A549 (cell line): ENCODE measurements at regions of chr14 and their contacts with region 1.

Region 1: DNA sequence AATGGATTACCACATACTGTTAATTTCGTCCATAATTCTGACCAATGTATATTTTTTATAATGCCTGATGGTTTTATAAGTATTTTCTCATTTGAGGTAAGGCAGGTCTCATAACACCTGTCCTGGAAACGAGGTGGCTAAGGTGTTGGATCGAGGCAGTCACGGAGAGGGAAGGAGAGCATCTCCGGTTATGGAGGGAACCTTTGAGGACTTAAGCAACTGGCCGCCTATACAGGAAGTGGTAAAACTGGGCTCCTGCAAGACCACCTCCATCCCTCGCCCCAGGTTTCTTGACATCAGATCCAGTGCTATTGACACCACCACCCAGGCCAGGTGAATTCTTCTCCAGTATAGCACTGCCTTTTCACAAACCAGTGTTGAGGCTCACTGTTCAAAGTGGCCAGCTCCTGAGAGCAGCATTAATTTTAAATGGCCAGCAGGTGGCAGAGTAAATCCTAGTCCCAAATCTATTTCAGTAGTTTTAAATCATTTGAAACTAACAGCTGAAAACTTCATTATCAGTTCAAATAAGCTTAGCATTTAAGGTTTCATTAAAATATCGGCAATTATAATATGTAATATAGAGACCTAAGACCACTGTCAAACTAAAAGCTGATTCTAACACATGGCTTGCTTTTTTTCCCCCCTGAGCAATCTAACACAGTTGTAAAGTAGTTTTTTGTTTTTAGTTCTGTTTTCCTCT is 100.8 kb downstream of the PPM1A start:
- DNase-seq: peak; percentile 56 to 58
- ATAC-seq: peak; percentile 82 to 87
- H3K4me3 ChIP-seq: no peak overlapping the region
- H3K27ac ChIP-seq: no peak overlapping the region
- H3K4me1 ChIP-seq: no peaks in the 10 kb centered on the region
- CTCF ChIP-seq: peak; percentile 83
- EP300 ChIP-seq: no peak
- POLR2A ChIP-seq: no peak
- RAD21 ChIP-seq: peak; percentile 61 to 62

Region 2: DNA sequence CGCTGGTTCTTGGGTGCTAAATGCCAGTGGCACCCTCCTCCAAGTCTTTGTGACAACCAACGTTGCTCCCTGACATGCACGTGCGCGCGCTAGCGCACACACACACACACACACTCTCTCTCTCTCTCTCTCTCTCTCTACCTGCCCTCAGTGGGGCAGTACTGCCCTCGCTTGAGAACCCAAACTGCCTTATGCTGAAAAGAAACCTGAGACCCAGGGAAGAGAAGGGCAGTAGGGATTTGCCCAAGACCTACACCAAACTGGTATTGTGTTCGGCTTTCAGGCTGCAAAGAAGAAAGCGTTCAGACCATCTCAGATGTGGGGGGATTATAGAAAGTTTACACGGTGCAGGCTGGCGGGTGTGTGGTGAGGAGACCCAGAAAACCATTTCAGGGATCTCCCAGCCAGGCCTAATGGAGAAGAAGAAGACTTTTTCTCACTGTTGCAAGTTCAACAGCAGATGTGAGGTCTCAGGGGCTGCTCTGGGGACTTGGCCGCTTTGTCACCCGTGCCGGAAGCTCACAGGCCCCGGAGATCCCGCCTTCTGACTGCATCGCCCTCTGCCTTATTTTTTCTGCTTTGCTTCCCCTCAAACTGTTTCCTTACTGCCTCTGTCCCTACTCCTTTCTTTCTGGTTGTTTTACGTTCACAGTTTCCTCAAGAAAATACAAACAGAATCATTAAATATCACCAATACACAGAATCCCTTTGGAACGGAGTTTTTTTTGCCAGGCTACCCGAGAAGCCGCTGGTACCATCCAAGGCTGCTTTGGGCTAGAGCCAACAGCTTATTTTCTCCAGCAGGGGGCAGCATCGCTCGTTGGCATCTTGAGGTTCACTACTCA is 18.4 kb before region 1 on chr14:
- CTCF ChIA-PET with region 1: interaction called, 17 read pairs
- POLR2A ChIA-PET with region 1: no interaction called
- DNase-seq: peak; percentile 38 to 72
- ATAC-seq: peak; percentile 76 to 87
- H3K4me3 ChIP-seq: peak overlapping the region; percentile 42
- H3K27ac ChIP-seq: peak overlapping the region; percentile 52 to 76; a peak in 5 of 6 replicates
- H3K4me1 ChIP-seq: 0 out of 3 replicates have a peak, but pooled peaks cover 5% of the 10 kb centered on the region
- CTCF ChIP-seq: peak; percentile 83
- EP300 ChIP-seq: no peak
- POLR2A ChIP-seq: no peak
- RAD21 ChIP-seq: peak; percentile 44 to 60; a peak in 3 of 5 replicates

Region 3: DNA sequence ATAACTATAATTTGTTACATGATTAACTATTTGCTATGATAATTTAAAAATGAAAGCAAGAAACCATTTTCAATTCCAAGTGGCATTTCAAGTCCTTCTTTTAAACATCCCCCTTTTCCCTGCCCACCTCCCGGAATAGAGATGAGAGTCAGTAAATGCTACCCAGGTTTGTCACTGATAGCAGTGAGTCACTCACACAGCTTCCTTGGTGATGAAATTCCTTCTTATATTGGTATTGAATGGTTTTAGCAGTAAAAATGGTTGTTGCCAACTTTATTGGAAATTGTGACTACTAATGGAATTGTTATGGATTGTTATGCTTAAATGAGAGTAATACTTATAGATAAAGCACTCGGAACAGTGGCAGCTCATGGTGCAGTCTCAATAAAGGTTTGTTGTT is 10.2 kb before region 1 on chr14:
- CTCF ChIA-PET with region 1: interaction called, 13 read pairs
- POLR2A ChIA-PET with region 1: no interaction called
- DNase-seq: no peak
- ATAC-seq: no peak
- H3K4me3 ChIP-seq: no peak overlapping the region
- H3K27ac ChIP-seq: no peak overlapping the region
- H3K4me1 ChIP-seq: no peaks in the 10 kb centered on the region
- CTCF ChIP-seq: no peak
- EP300 ChIP-seq: no peak
- POLR2A ChIP-seq: no peak
- RAD21 ChIP-seq: no peak

Region 4: DNA sequence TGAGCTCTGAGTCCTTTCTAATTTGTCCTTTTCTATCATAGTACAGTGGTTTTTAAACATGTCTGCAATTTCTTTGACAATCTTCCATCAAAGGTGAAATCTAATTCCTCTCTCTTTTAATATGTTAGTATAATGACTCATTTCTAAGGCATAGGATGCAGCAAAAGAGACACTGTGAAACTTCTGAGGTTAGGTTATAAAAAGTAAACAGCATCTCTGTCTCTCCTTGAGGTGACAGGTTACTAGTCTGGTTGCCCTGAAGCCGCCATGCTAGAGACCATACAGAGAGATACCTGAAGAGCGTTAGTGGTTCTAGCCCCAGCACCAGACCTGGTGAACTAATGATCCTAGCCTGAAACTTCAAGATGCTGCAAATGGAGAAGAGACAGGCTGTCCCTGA is 13.5 kb after region 1 on chr14:
- CTCF ChIA-PET with region 1: interaction called, 15 read pairs
- POLR2A ChIA-PET with region 1: no interaction called
- DNase-seq: no peak
- ATAC-seq: no peak
- H3K4me3 ChIP-seq: no peak overlapping the region
- H3K27ac ChIP-seq: no peak overlapping the region
- H3K4me1 ChIP-seq: no peaks in the 10 kb centered on the region
- CTCF ChIP-seq: no peak
- EP300 ChIP-seq: no peak
- POLR2A ChIP-seq: no peak
- RAD21 ChIP-seq: no peak

Region 5: DNA sequence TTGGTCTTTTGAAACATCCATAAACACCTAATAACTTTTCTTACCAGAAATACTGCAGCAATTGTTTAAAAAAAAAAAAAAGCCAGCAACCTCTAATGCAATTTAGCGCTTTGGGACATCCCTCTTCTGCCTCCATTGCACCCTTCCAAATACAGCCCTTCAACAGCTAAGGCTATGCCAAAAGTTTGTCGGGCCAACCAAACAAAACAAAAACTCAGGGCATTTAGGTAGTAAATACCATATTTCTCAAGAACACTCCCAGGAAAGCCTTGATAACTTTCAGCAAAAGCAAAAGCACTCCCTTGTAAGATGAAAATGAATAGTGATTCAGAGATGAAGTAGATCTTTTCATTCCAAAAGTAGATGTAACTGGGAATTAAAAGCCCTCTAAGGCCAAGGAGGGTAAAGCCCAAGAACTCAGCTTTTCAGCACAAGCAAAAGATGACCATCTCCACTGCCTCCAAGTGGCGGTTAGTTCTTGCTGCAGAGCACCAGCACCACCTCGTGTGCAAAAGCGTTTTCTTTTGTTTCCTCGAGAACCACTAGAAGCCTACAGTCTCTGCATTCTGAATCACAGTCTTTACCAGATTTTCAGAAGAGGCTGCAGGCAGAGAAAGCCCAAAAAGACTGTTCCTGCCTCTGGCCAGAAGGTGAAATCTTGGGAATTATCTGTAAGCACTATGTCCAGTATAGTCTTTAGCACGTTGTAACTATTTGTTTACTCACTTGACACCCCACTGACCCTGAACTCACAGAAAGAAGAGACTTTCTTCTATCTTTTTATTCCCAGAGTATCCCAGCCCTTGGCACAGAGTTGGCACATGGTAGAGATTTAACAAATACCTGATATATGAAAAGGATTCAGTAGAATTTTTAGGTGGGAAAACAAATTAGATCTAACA is 212.3 kb after region 1 on chr14:
- CTCF ChIA-PET with region 1: interaction called, 126 read pairs
- POLR2A ChIA-PET with region 1: no interaction called
- DNase-seq: peak; percentile 52 to 81
- ATAC-seq: peak; percentile 99
- H3K4me3 ChIP-seq: no peak overlapping the region
- H3K27ac ChIP-seq: no peak overlapping the region
- H3K4me1 ChIP-seq: no peaks in the 10 kb centered on the region
- CTCF ChIP-seq: peak; percentile 79
- EP300 ChIP-seq: no peak
- POLR2A ChIP-seq: no peak
- RAD21 ChIP-seq: peak; percentile 83 to 91

Region 6: GRCh38 chr14:60734465-60735242 is 384.8 kb after region 1 on chr14 and contains the start of gene MNAT1:
- CTCF ChIA-PET with region 1: no interaction called
- POLR2A ChIA-PET with region 1: no interaction called
- DNase-seq: peak; percentile 56 to 90
- ATAC-seq: peak; percentile 98
- H3K4me3 ChIP-seq: peak within 1 kb of the TSS; percentile 79
- H3K27ac ChIP-seq: peak within 1 kb of the TSS; percentile 77 to 86
- H3K4me1 ChIP-seq: peaks cover 16% of the 10 kb centered on the region; the same call in 2 of the 3 replicates
- CTCF ChIP-seq: no peak
- EP300 ChIP-seq: no peak
- POLR2A ChIP-seq: peak; percentile 74
- RAD21 ChIP-seq: peak; percentile 21 to 30; a peak in 1 of 5 replicates
- polyA plus RNA-seq, gene MNAT1: 69.2 and 78.1 TPM in 2 replicates